Ovary (tissue), 10 donors: ENCODE measurements at regions of chr3 and their contacts with region 1.

Region 1: GRCh38 chr3:5057857-5058324 is 64.2 kb upstream of the ARL8B start:
- DNase-seq: peak; percentile 58 to 84 (median 75)
- H3K4me3 ChIP-seq: no peak overlapping the region
- H3K27ac ChIP-seq: no peak overlapping the region
- H3K4me1 ChIP-seq: peaks cover 2% of the 10 kb centered on the region
- H3K27me3 ChIP-seq: no peaks in the 10 kb centered on the region
- CTCF ChIP-seq: peak; percentile 52 to 77 (median 76)
- EP300 ChIP-seq: no peak
- POLR2A ChIP-seq: no peak

Region 2: GRCh38 chr3:4712143-4712542 is 345.7 kb before region 1 on chr3:
- intact Hi-C with region 1: loop called (anchors 1 to 10 kb)
- DNase-seq: peak in 1 of 5 donors; percentile 57
- H3K4me3 ChIP-seq: no peak overlapping the region
- H3K27ac ChIP-seq: no peak overlapping the region
- H3K4me1 ChIP-seq: no peaks in the 10 kb centered on the region
- H3K27me3 ChIP-seq: no peaks in the 10 kb centered on the region
- CTCF ChIP-seq: no peak
- EP300 ChIP-seq: no peak
- POLR2A ChIP-seq: no peak